ENCODE measurements at regions of chr5 and their contacts with region 1.

Region 1: GRCh38 chr5:153700940-153701339 is 210.5 kb downstream of the GRIA1 start:
- DNase-seq: no peak
- ATAC-seq: no peak
- H3K4me3 ChIP-seq: no peak overlapping the region
- H3K27ac ChIP-seq: no peak overlapping the region
- H3K4me1 ChIP-seq: no peaks in the 10 kb centered on the region
- H3K27me3 ChIP-seq: no peaks in the 10 kb centered on the region

Region 2: GRCh38 chr5:154025951-154026350 is 325.0 kb after region 1 on chr5:
- intact Hi-C with region 1: loop called in 1 of 2 experiments (anchors 10 kb)
- DNase-seq: no peak
- ATAC-seq: no peak
- H3K4me3 ChIP-seq: no peak overlapping the region
- H3K27ac ChIP-seq: no peak overlapping the region
- H3K4me1 ChIP-seq: no peaks in the 10 kb centered on the region
- H3K27me3 ChIP-seq: no peaks in the 10 kb centered on the region

Measured in aorta (tissue), 5 donors.